GM12878 (cell line): ENCODE measurements at regions of chr3 and their contacts with region 1.

Region 1: GRCh38 chr3:5767304-5767703 is 579.8 kb downstream of the EDEM1 start:
- DNase-seq: no peak
- ATAC-seq: no peak
- H3K4me3 ChIP-seq: no peak overlapping the region
- H3K27ac ChIP-seq: no peak overlapping the region
- H3K4me1 ChIP-seq: no peaks in the 10 kb centered on the region
- H3K27me3 ChIP-seq: no peaks in the 10 kb centered on the region
- CTCF ChIP-seq: no peak
- EP300 ChIP-seq: no peak
- POLR2A ChIP-seq: no peak
- RAD21 ChIP-seq: no peak

Region 2: GRCh38 chr3:5754602-5755001 is 12.7 kb before region 1 on chr3:
- CTCF ChIA-PET with region 1: interaction called, 10 read pairs
- POLR2A ChIA-PET with region 1: interaction called, 3 read pairs
- RAD21 ChIA-PET with region 1: interaction called, 3 read pairs
- SMC1A ChIA-PET with region 1: interaction called, 32 read pairs
- in situ Hi-C with region 1: no loop called
- intact Hi-C with region 1: no loop called
- DNase-seq: peak; percentile 41
- ATAC-seq: peak; percentile 88
- H3K4me3 ChIP-seq: no peak overlapping the region
- H3K27ac ChIP-seq: no peak overlapping the region
- H3K4me1 ChIP-seq: no peaks in the 10 kb centered on the region
- H3K27me3 ChIP-seq: no peaks in the 10 kb centered on the region; a peak in 1 of 4 replicates
- CTCF ChIP-seq: no peak
- EP300 ChIP-seq: peak; percentile 37 to 45; a peak in 2 of 4 replicates
- POLR2A ChIP-seq: no peak
- RAD21 ChIP-seq: no peak